ENCODE measurements at regions of chr1 and their contacts with region 1.

Region 1: DNA sequence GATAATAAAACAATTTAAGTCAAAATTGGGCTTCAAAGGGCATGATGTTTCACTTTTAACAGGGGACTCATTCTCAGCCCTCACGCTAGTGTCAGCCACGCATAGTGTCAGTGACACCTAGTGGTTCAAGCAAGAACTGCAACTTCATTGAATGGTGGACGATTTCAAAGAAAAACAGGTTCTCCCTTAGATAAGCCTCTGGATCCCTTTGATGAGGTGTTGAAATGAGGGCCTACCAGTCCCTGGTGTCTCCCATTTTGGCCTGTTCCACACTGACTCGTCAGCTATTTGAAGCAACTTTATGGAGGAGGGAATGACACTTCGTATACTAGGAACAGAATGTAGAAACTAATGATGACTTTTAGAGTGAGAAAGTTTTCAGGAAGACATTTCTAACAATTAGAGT is 56.2 kb downstream of the FCRL5 start:
- DNase-seq: peak; percentile 54 to 75 (median 75)
- H3K4me3 ChIP-seq: no peak overlapping the region
- H3K27ac ChIP-seq: no peak overlapping the region
- H3K4me1 ChIP-seq: no peaks in the 10 kb centered on the region
- H3K27me3 ChIP-seq: peaks cover 0 to 2% (median 0%) of the 10 kb centered on the region in 5 experiments

Region 2: GRCh38 chr1:157176591-157177121 is 319.5 kb before region 1 on chr1:
- CTCF ChIA-PET with region 1: interaction called, 13 read pairs
- POLR2A ChIA-PET with region 1: no interaction called
- DNase-seq: no peak
- H3K4me3 ChIP-seq: no peak overlapping the region
- H3K27ac ChIP-seq: no peak overlapping the region
- H3K4me1 ChIP-seq: peaks cover 0 to 16% (median 9%) of the 10 kb centered on the region in 4 experiments
- H3K27me3 ChIP-seq: no peaks in the 10 kb centered on the region

Region 3: DNA sequence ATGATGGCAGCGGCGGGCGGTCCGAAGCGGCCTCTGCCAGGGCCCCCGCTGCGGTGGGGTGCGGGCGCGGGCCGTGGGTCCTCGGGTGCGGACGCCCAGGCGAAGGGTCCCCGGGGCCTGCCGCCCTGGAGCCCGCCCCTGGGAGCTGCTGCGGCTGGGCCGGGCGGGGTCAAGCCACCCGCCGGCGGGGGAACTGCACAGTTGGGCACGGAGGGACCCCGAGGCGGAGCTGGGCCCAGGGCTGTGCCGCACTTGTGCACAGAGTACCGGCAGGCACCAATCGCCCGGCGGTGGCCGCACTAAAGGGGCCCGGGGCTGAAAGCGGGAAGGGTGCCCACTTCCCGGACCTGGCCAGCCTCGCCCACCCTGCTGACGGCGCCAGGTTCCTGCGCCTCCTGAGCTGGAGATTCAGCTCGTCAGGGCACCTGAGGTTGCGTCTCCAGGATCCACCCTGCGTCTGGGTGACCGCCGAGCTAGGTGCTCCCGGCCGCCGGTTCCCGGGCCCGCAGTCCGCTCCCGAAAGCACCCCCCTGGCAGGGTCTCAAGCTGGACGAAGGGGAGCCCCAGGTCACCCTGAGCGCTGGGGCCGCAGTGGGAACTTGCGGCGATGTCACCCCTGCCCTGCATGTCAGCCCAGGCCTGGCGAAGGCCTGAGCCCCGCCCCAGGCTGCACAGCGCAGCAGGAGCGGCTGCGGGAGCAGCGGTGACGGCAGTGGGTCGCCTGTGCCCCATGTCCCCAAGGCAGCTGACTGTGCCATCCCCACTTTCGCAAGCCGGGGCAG is 301.2 kb before region 1 on chr1:
- CTCF ChIA-PET with region 1: interaction called, 32 read pairs
- POLR2A ChIA-PET with region 1: no interaction called
- DNase-seq: no peak
- H3K4me3 ChIP-seq: peak overlapping the region in 3 of 7 experiments; percentile 36 to 58 (median 42)
- H3K27ac ChIP-seq: no peak overlapping the region
- H3K4me1 ChIP-seq: peaks cover 0 to 9% (median 4%) of the 10 kb centered on the region in 4 experiments
- H3K27me3 ChIP-seq: peaks cover 0 to 40% (median 20%) of the 10 kb centered on the region in 5 experiments

Region 4: DNA sequence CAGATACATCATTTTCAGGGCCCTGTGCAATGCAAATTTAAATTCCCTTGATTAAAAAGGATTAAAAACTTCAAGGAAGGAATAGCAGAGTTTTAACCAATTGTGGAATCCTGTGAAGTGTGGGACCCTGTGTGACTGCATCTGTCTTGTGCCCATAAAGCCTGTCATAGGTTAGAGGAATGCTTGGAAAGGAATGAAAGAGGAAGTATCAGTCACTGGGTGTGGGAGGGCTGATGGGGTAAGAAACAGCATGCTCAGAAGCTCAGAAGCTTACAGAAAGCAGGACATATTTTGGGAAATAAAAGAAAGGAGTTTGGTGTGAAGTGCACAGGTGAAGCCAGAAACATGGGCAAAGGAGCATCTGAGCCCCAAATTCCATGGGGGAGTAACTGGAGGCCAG is 207.1 kb before region 1 on chr1:
- CTCF ChIA-PET with region 1: no interaction called
- POLR2A ChIA-PET with region 1: no interaction called
- DNase-seq: peak in 2 of 3 donors; percentile 34 to 44
- H3K4me3 ChIP-seq: no peak overlapping the region
- H3K27ac ChIP-seq: no peak overlapping the region
- H3K4me1 ChIP-seq: peaks cover 0 to 7% (median 2%) of the 10 kb centered on the region in 4 experiments
- H3K27me3 ChIP-seq: peaks cover 0 to 2% (median 0%) of the 10 kb centered on the region in 5 experiments

Region 5: GRCh38 chr1:157369808-157370521 is 126.2 kb before region 1 on chr1:
- CTCF ChIA-PET with region 1: interaction called, 32 read pairs
- POLR2A ChIA-PET with region 1: no interaction called
- DNase-seq: peak; percentile 67 to 81 (median 81)
- H3K4me3 ChIP-seq: no peak overlapping the region
- H3K27ac ChIP-seq: no peak overlapping the region
- H3K4me1 ChIP-seq: peaks cover 0 to 28% (median 12%) of the 10 kb centered on the region in 4 experiments
- H3K27me3 ChIP-seq: no peaks in the 10 kb centered on the region

Region 6: DNA sequence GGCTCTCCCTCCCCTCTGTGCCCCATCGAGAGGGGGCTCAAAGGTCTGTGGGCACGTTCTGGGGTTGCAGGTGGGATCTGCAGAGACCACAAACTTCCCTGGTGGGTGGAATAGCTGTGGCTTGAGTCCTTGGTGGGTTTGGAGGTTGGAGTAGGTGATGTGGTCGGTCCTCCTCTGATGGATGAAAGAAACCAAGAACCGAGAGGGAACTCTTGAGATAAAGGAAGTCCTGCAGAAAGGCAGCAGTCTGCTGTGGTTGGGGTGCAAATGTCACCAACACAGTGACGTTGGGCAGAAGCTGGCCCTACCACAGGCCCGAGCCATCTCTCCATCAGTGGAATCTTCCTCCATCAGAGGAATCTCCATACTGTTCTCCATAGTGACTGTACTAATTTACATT is 115.6 kb before region 1 on chr1:
- CTCF ChIA-PET with region 1: interaction called, 105 read pairs
- POLR2A ChIA-PET with region 1: no interaction called
- DNase-seq: peak in 2 of 3 donors; percentile 54 to 58
- H3K4me3 ChIP-seq: no peak overlapping the region
- H3K27ac ChIP-seq: no peak overlapping the region
- H3K4me1 ChIP-seq: peaks cover 0 to 19% (median 3%) of the 10 kb centered on the region in 4 experiments
- H3K27me3 ChIP-seq: no peaks in the 10 kb centered on the region

Region 7: DNA sequence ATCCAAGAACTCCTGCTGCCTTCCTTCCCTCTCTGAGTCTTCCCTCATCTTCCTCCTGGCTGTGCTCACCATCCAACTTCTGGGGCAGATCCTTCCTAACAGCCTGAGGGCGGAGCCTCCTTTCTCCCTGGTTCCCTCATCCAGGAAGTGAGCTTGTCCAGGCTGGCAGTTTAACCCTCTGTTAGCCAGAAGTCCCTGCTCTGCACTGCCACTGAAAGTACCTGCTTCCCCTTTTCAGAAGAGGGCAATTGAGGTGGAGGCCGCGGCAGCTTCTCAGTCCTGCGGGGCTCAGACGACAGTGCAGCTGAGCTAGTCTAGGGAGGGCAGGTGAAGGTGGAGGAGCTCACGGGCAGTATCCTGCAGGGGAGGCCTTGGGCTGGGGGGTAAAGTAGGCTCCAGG is 92.9 kb before region 1 on chr1:
- CTCF ChIA-PET with region 1: interaction called, 11 read pairs
- POLR2A ChIA-PET with region 1: no interaction called
- DNase-seq: peak; percentile 50 to 85 (median 75)
- H3K4me3 ChIP-seq: peak overlapping the region in 5 of 7 experiments; percentile 36 to 63 (median 52)
- H3K27ac ChIP-seq: peak overlapping the region; percentile 80 to 91
- H3K4me1 ChIP-seq: peaks cover 21 to 84% (median 68%) of the 10 kb centered on the region in 4 experiments
- H3K27me3 ChIP-seq: no peaks in the 10 kb centered on the region

Region 8: DNA sequence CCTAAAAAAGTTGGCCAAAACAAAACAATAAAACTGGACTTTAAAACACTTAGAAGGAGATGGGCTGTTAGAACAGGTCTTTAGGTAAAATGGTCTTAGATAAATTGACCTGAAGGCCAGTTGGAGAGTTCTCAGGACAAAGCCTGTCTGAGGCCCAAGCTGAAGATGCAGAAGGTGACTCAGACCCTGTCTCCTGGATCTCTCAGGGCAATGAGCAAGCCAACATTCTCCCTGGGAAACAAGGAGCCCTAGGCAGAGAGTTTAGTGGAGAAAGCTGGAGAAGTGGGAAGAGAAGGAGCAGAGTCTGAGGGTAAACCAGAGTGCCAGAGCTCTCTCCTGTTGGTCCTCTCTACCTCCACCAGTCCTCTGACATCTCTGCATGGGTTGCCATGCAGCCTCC is 13.9 kb before region 1 on chr1:
- CTCF ChIA-PET with region 1: interaction called, 10 read pairs
- POLR2A ChIA-PET with region 1: no interaction called
- DNase-seq: no peak
- H3K4me3 ChIP-seq: no peak overlapping the region
- H3K27ac ChIP-seq: no peak overlapping the region
- H3K4me1 ChIP-seq: peaks cover 0 to 19% (median 13%) of the 10 kb centered on the region in 4 experiments
- H3K27me3 ChIP-seq: no peaks in the 10 kb centered on the region